Mammary epithelial cell (primary cell): ENCODE measurements at regions of chr20 and their contacts with region 1.

Region 1: DNA sequence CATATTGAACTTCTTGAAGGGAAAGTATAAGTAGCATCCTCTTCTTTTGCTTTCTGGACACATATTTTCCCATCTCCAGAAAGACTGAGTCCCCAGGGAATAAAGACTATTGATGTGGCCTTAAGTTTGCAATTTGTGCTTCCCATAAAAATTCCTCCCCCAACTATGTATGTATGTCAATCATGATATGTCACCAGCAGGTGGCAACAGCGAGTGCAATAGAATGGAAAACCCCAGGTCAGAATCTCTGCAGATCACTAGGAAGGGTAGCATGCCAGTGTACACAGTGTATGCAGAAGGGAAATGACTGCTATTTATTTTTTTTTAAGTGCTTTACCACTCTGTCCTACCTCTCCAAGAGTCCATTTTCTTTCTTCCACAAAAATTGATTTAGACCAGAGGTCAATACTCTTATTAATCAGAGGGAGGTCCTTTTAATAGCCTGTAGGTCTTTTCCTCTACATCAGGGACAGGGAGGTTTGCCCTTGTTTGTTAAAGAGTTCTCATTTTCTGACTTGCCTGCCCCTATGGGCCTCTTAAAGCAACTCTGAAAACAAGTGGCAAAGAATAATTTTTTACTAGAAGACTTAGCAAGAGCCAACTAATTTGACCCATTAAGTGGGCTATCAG is 61.4 kb downstream of the BMP2 start:
- DNase-seq: peak; percentile 68
- H3K4me3 ChIP-seq: no peak overlapping the region
- H3K27ac ChIP-seq: peak overlapping the region; percentile 39
- H3K4me1 ChIP-seq: peaks cover 11% of the 10 kb centered on the region
- H3K27me3 ChIP-seq: no peaks in the 10 kb centered on the region
- CTCF ChIP-seq: peak; percentile 73 to 76

Region 2: GRCh38 chr20:5806457-5807263 is 1022.2 kb before region 1 on chr20:
- CTCF ChIA-PET with region 1: no interaction called
- dilution Hi-C with region 1: no loop called
- in situ Hi-C with region 1: no loop called
- intact Hi-C with region 1: no loop called
- DNase-seq: no peak
- H3K4me3 ChIP-seq: no peak overlapping the region
- H3K27ac ChIP-seq: no peak overlapping the region
- H3K4me1 ChIP-seq: no peaks in the 10 kb centered on the region
- H3K27me3 ChIP-seq: no peaks in the 10 kb centered on the region
- CTCF ChIP-seq: peak; percentile 18 to 44

Region 3: DNA sequence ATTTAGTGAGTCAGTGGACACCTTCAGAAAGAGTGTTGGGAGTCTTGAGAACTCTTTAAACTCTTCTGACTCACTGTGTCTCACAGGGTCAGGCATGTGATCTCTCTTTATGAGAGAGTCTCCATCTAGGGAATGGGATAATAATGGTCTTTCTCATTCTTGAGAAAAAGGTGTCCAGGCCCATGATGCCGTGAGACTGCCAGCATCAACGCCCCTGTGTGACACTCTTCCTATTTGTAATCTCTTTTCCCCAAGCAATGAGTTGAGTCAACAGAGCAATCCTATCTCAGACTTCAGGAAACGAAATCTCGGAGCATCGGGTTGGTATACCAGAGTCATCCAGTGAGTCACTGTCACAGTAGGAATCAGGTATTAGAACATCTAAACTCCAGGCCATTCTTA is 143.7 kb before region 1 on chr20:
- CTCF ChIA-PET with region 1: no interaction called
- dilution Hi-C with region 1: no loop called
- in situ Hi-C with region 1: no loop called
- intact Hi-C with region 1: no loop called
- DNase-seq: peak; percentile 83
- H3K4me3 ChIP-seq: no peak overlapping the region
- H3K27ac ChIP-seq: peak overlapping the region; percentile 4
- H3K4me1 ChIP-seq: no peaks in the 10 kb centered on the region
- H3K27me3 ChIP-seq: no peaks in the 10 kb centered on the region
- CTCF ChIP-seq: no peak

Region 4: DNA sequence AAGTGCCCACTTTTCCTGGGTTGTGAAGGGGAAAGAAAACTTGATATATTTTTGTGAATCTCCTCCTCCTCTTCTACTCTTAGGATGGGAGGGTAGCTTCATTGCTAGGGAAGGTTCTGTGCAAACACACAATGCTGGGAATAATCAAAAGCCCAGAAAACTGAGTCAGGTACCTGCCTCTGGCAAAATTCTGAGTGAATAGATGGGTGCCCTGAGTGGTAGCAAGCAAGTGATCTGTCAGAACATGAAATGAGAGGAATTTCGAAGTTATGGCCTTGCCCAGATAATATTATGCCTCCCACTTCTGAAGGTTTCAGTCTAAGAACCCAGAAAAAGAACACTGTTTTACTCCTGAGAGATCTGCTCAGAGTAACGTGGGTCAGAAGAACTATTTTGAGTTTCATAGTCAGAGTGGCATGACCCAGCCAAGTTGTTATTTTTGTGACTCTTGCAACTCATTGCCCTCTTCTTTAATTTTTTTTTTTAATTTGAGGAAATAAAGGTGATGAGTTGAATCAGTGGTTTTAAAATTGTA is 96.9 kb after region 1 on chr20:
- CTCF ChIA-PET with region 1: no interaction called
- dilution Hi-C with region 1: no loop called
- in situ Hi-C with region 1: no loop called
- intact Hi-C with region 1: no loop called
- DNase-seq: peak; percentile 88
- H3K4me3 ChIP-seq: peak overlapping the region in 2 of 3 experiments; percentile 13 to 27
- H3K27ac ChIP-seq: peak overlapping the region; percentile 75
- H3K4me1 ChIP-seq: peaks cover 19% of the 10 kb centered on the region
- H3K27me3 ChIP-seq: no peaks in the 10 kb centered on the region
- CTCF ChIP-seq: no peak

Region 5: DNA sequence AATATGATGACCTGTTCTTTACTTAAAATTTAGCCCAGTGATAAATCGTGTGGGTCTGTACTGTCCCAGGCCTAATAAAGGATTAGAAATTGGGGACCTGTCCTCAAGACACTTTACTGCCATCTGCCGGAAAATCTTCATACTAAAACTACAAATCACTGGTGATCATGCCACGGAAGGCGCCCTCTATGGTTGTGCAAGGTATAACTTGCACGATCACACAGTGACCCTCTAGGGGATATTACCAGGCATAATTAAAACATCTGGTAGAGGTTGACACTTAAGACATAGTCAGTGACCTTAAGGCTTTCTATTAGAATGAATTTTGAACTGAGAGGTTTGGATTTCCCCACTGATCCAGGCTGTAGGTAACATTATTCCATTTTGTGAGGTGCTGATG is 111.1 kb after region 1 on chr20:
- CTCF ChIA-PET with region 1: interaction called, 3 read pairs
- dilution Hi-C with region 1: no loop called
- in situ Hi-C with region 1: no loop called
- intact Hi-C with region 1: loop called (anchors 1 kb)
- DNase-seq: peak; percentile 1
- H3K4me3 ChIP-seq: no peak overlapping the region
- H3K27ac ChIP-seq: no peak overlapping the region
- H3K4me1 ChIP-seq: peaks cover 6% of the 10 kb centered on the region
- H3K27me3 ChIP-seq: no peaks in the 10 kb centered on the region
- CTCF ChIP-seq: peak; percentile 85 to 88

Region 6: DNA sequence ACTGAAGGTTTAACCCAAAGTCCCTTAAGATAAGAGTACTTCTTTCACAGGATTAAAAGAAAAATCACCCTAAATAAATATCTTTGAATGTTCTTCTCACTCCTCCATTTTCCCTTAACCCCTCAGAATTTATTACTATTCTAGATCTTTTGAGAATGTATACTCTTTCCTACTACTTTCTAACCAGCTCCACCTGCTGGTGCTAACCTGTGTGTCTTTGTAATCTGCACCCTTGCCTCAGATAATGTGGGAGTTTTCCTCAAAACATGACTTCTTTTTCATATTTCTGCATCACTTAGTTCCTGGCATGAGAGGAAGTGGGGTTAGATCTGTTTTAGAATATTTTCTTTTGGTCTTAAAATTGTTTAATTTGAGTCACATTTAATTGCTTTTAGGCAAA is 332.8 kb after region 1 on chr20:
- CTCF ChIA-PET with region 1: no interaction called
- dilution Hi-C with region 1: no loop called
- in situ Hi-C with region 1: no loop called
- intact Hi-C with region 1: loop called (anchors 2 kb)
- DNase-seq: peak; percentile 25
- H3K4me3 ChIP-seq: no peak overlapping the region
- H3K27ac ChIP-seq: no peak overlapping the region
- H3K4me1 ChIP-seq: peaks cover 3% of the 10 kb centered on the region
- H3K27me3 ChIP-seq: no peaks in the 10 kb centered on the region
- CTCF ChIP-seq: peak; percentile 65 to 68

Region 7: GRCh38 chr20:7285918-7286556 is 457.1 kb after region 1 on chr20:
- CTCF ChIA-PET with region 1: no interaction called
- dilution Hi-C with region 1: no loop called
- in situ Hi-C with region 1: no loop called
- intact Hi-C with region 1: loop called (anchors 2 kb)
- DNase-seq: peak; percentile 71
- H3K4me3 ChIP-seq: no peak overlapping the region
- H3K27ac ChIP-seq: no peak overlapping the region
- H3K4me1 ChIP-seq: no peaks in the 10 kb centered on the region
- H3K27me3 ChIP-seq: no peaks in the 10 kb centered on the region
- CTCF ChIP-seq: peak; percentile 92 to 93